Mammary epithelial cell (primary cell): ENCODE measurements at regions of chr2 and their contacts with region 1.

Region 1: DNA sequence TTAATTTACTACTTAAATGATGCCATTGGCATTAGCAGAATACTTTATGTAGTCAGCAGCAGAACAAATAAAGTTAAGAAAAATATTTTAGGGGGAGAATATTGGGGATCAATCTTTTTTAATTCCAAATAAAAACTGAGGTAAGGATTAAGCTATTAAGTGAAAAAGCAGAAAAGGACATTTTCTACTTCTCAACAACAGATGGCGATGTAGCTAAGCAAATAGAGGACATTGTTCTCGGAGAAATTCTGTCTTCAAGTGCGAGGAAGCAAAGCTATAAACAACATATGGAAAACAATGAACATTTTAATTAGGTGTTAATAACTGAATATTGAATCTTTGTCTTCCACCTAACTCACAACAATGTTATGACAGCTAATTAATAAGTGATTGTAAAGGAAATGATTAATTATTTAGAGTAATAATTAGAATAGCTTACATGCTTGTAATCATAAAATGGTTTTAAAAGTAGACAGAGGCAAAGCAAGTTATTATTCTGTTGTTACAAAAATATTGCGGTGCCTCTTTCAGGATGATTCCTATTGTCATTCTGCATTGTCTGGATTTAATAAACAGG is 32.9 kb upstream of the CCDC93 start:
- DNase-seq: peak; percentile 21
- H3K4me3 ChIP-seq: no peak overlapping the region
- H3K27ac ChIP-seq: no peak overlapping the region
- H3K4me1 ChIP-seq: no peaks in the 10 kb centered on the region
- H3K27me3 ChIP-seq: no peaks in the 10 kb centered on the region
- CTCF ChIP-seq: peak; percentile 63 to 67

Region 2: DNA sequence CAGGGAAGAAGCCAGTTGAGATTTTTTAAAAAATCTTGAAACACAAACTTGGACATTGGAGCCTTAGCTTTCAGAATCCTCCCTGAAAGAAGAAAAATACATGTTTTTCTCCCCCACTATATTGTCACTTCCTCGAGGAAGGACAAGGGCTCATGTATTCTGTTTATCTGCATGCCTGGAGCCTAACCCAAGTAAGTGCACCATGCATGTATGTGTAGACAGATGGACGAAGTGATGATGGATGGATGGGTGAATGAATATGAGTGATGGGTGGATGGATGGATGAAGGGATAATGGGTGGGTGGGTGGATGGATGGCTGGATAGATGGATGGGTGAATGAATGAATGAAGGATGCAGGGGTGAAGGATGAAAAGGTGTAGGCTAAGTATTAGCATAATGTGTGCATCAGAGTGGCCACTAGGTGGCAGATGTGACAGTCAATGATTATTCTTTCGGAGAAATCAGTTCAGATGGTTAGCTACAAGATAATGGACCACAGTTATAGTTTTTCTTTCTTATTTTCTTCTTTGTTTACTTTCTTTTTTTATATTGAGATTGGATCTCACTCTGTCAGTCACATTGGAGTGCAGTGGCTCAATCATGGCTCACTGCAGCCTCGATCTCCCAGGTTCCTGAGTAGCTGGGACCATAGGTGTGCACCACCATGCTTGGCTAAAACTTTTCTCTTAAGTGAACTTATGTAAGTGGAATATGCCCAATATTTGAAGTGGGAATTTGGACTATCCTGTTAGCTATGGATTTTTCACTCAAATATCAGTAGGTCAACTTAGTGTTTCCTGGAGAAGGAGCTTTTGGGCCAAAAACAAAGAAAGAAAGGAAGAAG is 14.3 kb before region 1 on chr2:
- CTCF ChIA-PET with region 1: interaction called, 12 read pairs
- dilution Hi-C with region 1: no loop called
- in situ Hi-C with region 1: no loop called
- intact Hi-C with region 1: no loop called
- DNase-seq: peak; percentile 23
- H3K4me3 ChIP-seq: no peak overlapping the region
- H3K27ac ChIP-seq: no peak overlapping the region
- H3K4me1 ChIP-seq: no peaks in the 10 kb centered on the region
- H3K27me3 ChIP-seq: peaks cover 2% of the 10 kb centered on the region
- CTCF ChIP-seq: peak; percentile 68 to 74

Region 3: DNA sequence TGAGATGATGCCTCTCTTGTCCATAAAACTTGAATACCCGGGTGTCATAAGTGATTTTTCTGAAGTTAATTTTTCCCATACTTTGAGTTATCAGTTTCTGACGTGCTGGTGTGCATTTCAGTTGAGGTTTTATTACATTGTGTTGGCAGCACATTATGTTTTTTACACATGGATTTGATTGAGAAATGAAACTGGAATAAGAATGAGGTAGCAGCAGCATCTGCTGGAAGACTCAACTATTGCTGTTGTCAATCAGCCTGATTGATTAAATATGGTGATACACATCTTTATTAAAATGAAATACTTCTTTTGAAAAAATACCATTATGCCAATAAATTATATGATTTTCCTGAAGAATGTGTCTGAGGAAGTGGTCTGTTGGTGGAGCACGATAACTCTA is 102.1 kb after region 1 on chr2:
- CTCF ChIA-PET with region 1: interaction called, 6 read pairs
- dilution Hi-C with region 1: no loop called
- in situ Hi-C with region 1: no loop called
- intact Hi-C with region 1: loop called (anchors 1 kb)
- DNase-seq: no peak
- H3K4me3 ChIP-seq: no peak overlapping the region
- H3K27ac ChIP-seq: no peak overlapping the region
- H3K4me1 ChIP-seq: peaks cover 4% of the 10 kb centered on the region
- H3K27me3 ChIP-seq: no peaks in the 10 kb centered on the region
- CTCF ChIP-seq: peak; percentile 10 to 47

Region 4: DNA sequence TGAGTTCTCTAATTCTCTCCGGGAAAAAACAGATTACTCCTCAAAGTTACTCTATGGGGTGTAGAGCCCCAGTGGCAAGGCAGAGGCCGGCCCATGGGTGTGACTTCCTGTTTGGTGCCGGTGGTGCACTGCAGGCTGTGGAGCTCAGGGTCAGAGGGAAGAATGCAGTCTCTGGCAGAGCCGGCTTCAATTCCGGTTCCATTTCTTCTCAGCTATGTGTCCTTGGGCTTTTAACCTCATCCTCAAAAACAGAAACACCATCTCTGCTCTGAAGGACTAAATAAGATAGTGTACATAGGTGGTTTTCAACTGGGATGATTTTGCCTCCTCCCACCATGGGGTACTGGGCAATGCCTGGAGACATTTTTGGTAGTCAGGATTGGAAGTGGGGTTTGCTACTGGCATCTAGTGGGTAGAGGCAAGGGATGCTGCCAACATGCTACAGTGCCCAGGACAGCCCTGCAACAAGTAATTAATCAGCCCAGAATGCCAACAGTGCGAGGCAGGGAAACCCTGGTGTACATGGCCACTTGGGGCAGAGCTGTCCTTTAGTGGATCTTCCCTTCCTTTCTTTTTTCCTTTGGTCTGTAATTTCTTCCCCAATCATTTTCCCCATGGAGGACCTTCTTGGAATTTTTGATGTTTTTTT is 122.8 kb after region 1 on chr2:
- CTCF ChIA-PET with region 1: no interaction called
- dilution Hi-C with region 1: no loop called
- in situ Hi-C with region 1: no loop called
- intact Hi-C with region 1: no loop called
- DNase-seq: no peak
- H3K4me3 ChIP-seq: no peak overlapping the region
- H3K27ac ChIP-seq: no peak overlapping the region
- H3K4me1 ChIP-seq: peaks cover 8% of the 10 kb centered on the region
- H3K27me3 ChIP-seq: no peaks in the 10 kb centered on the region
- CTCF ChIP-seq: peak in 1 of 2 donors; percentile 7

Region 5: DNA sequence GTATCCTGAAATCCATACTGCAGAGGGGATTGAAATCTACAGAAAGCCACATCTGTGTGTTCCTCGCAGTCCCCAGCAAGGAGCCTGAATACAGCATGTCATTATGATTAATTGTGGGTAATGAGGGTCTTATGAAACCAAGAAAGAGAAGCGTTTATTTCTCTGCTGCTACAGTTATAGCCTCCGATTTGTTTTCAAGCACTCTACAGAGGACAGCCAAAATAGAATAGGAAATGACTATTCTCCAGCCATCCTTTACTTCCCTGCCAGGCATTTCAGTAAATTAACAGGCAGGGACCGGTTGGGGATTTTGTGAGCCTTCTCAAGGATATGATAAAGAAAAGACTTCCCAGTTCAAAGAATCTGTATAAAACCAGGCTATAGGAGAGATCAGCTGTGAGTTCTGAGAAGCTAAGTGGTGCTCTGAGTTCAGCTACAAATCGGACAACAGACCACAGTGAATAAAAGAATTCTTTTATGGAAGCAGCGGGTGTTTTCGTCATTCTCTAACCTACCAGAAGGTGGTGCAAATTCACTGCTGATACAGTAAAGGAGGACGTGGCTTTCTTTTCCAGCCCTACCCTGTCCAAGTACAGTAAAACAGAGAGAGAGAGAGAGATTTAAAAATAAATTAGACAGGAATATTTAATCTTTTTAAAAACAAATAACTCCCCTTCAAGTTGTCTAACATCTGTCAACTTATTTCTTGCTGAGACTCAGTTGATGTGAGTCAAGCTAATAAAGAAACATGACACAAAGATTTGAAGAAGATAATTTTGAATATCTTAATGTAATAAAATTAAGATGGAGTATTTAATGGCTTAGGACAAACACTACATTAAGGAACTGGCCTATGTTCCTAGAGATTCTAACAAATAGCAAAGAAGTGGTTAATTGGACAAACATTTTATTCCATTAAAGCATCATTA is 175.2 kb after region 1 on chr2:
- CTCF ChIA-PET with region 1: no interaction called
- dilution Hi-C with region 1: no loop called
- in situ Hi-C with region 1: no loop called
- intact Hi-C with region 1: loop called (anchors 1 kb)
- DNase-seq: peak; percentile 59
- H3K4me3 ChIP-seq: no peak overlapping the region
- H3K27ac ChIP-seq: no peak overlapping the region
- H3K4me1 ChIP-seq: peaks cover 6% of the 10 kb centered on the region
- H3K27me3 ChIP-seq: peaks cover 24% of the 10 kb centered on the region
- CTCF ChIP-seq: peak; percentile 79 to 80

Region 6: DNA sequence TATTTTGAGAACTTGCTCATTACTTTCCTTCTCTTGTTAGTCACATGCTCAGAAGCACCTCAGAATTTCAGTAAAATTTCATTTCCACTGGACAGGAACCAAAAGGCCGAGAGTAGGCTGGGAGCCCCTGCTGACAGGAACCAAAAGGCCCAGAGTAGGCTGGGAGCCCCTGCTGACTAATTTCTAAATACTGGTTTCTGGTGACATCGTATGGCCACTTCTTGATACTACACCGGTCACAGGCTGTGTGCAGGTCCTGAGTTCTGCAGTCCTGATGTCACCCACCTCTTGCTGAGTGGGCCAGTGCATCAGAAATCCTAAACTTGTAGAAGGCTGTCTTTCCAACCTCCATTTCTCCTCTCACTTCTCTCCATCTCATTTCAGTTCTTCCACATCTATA is 818.4 kb after region 1 on chr2:
- CTCF ChIA-PET with region 1: no interaction called
- dilution Hi-C with region 1: loop called (anchors 25 kb)
- in situ Hi-C with region 1: loop called in 1 of 2 experiments (anchors 25 kb)
- intact Hi-C with region 1: loop called (anchors 1 kb)
- DNase-seq: peak; percentile 39
- H3K4me3 ChIP-seq: no peak overlapping the region
- H3K27ac ChIP-seq: no peak overlapping the region
- H3K4me1 ChIP-seq: peaks cover 8% of the 10 kb centered on the region
- H3K27me3 ChIP-seq: no peaks in the 10 kb centered on the region
- CTCF ChIP-seq: peak; percentile 63 to 75